Activated CD8-positive, alpha-beta T cell treated with anti-CD3 and anti-CD28 coated beads for 36 hours (primary cell): ENCODE measurements at regions of chr19 and their contacts with region 1.

Region 1: DNA sequence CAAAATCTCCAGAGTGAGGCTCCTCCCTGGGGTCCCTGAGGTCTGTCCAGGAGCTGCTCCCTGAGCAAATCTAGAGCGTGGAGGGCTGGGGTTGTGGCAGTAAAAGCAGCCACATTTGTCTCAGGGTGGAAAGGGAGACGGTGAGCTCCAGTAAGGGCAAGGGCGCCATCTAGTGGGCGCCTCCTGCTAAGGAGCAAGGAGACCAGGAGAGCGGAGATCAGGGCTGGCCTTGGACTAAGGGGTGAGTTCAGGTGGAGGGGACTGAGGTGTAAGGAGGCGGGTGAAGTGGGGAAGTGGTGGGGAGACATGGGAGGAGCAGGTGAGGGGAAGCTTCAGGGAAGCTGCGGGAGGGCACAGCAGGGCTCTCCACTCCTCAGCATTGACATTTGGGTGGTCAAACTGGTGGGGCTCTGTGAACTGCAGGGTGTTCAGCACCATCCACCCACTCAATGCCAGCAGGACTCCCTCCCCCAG is 5.3 kb upstream of the CEACAM21 start:
- DNase-seq: peak; percentile 92
- ATAC-seq: peak; percentile 96
- H3K4me3 Mint-ChIP-seq: no peak overlapping the region
- H3K27ac Mint-ChIP-seq: no peak overlapping the region
- H3K4me1 Mint-ChIP-seq: peaks cover 18% of the 10 kb centered on the region
- H3K27me3 Mint-ChIP-seq: peaks cover 9% of the 10 kb centered on the region
- CTCF ChIP-seq: peak; percentile 95

Region 2: GRCh38 chr19:41521931-41522555 is 48.6 kb before region 1 on chr19:
- CTCF ChIA-PET with region 1: no interaction called
- POLR2A ChIA-PET with region 1: no interaction called
- intact Hi-C with region 1: no loop called
- DNase-seq: peak; percentile 59
- ATAC-seq: peak; percentile 63
- H3K4me3 Mint-ChIP-seq: peak overlapping the region; percentile 72
- H3K27ac Mint-ChIP-seq: peak overlapping the region; percentile 81
- H3K4me1 Mint-ChIP-seq: peaks cover 21% of the 10 kb centered on the region
- H3K27me3 Mint-ChIP-seq: peaks cover 38% of the 10 kb centered on the region
- CTCF ChIP-seq: peak; percentile 27

Region 3: GRCh38 chr19:41541990-41542584 is 28.6 kb before region 1 on chr19:
- CTCF ChIA-PET with region 1: interaction called, 16 read pairs
- POLR2A ChIA-PET with region 1: interaction called, 6 read pairs
- intact Hi-C with region 1: no loop called
- DNase-seq: peak; percentile 88
- ATAC-seq: peak; percentile 9
- H3K4me3 Mint-ChIP-seq: peak overlapping the region; percentile 7
- H3K27ac Mint-ChIP-seq: peak overlapping the region; percentile 64
- H3K4me1 Mint-ChIP-seq: peaks cover 51% of the 10 kb centered on the region
- H3K27me3 Mint-ChIP-seq: peaks cover 5% of the 10 kb centered on the region
- CTCF ChIP-seq: peak; percentile 74

Region 4: DNA sequence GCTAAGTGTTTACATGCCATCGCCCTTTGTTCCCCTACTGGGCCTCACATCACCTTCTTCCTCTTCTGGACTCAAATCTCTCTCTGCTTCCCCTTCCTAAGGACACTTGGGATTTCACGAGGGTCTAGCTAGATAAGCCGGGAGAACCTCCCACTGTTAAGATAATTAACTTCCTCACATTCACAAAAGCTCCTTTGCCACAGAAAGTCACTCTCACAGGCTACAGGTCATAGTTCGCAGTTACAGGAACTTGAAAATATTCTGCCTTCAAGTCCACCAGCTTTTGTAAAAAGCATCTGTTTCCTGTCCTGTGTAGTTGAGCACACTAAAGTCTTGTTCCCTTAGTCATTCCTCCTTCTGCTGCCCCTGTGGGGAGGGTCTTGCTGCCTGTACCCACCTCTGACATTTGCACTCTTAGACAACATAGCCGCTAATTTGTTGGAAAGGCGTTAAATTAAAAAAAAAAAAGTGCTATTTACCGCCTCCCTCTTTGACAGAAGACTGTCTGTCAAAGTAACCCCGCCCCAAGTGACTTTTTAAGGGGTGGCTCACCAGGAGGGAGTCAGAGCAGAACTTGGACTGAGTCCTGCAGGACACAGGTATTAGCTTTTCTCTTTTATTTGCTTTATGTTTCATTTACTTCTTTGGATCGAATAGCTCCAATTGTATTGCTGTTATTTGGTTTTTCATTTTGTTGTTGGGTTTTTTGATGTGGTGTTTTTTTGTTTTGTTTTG is 21.6 kb before region 1 on chr19:
- CTCF ChIA-PET with region 1: interaction called, 16 read pairs
- POLR2A ChIA-PET with region 1: interaction called, 5 read pairs
- intact Hi-C with region 1: no loop called
- DNase-seq: peak; percentile 79
- ATAC-seq: peak; percentile 72
- H3K4me3 Mint-ChIP-seq: peak overlapping the region; percentile 87
- H3K27ac Mint-ChIP-seq: peak overlapping the region; percentile 96
- H3K4me1 Mint-ChIP-seq: peaks cover 47% of the 10 kb centered on the region
- H3K27me3 Mint-ChIP-seq: no peaks in the 10 kb centered on the region
- CTCF ChIP-seq: no peak

Region 5: DNA sequence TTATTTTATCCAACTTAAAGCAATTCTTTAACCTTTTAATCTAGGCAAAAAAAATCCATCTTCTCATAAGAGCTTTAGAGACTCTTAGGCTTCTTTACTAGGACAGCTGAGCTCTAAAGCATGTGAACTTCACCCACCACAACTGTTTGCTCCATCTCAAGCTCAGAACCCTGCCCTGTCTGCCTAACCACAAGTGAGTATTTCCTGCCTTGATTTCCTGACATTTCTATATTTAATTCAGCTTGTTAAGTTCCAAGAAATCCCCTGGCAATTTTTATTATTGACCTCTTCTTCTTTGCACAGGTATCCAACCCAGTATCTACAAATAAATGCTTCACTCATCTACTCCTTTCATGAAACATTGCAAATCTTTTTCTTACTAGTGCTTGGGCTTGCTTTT is 15.8 kb before region 1 on chr19:
- CTCF ChIA-PET with region 1: interaction called, 54 read pairs
- POLR2A ChIA-PET with region 1: interaction called, 4 read pairs
- intact Hi-C with region 1: no loop called
- DNase-seq: no peak
- ATAC-seq: peak; percentile 39
- H3K4me3 Mint-ChIP-seq: peak overlapping the region; percentile 52
- H3K27ac Mint-ChIP-seq: peak overlapping the region; percentile 81
- H3K4me1 Mint-ChIP-seq: peaks cover 46% of the 10 kb centered on the region
- H3K27me3 Mint-ChIP-seq: no peaks in the 10 kb centered on the region
- CTCF ChIP-seq: no peak

Region 6: GRCh38 chr19:41584260-41584810 is 13.7 kb after region 1 on chr19:
- CTCF ChIA-PET with region 1: interaction called, 26 read pairs
- POLR2A ChIA-PET with region 1: interaction called, 3 read pairs
- intact Hi-C with region 1: no loop called
- DNase-seq: no peak
- ATAC-seq: no peak
- H3K4me3 Mint-ChIP-seq: no peak overlapping the region
- H3K27ac Mint-ChIP-seq: no peak overlapping the region
- H3K4me1 Mint-ChIP-seq: no peaks in the 10 kb centered on the region
- H3K27me3 Mint-ChIP-seq: no peaks in the 10 kb centered on the region
- CTCF ChIP-seq: no peak

Region 7: DNA sequence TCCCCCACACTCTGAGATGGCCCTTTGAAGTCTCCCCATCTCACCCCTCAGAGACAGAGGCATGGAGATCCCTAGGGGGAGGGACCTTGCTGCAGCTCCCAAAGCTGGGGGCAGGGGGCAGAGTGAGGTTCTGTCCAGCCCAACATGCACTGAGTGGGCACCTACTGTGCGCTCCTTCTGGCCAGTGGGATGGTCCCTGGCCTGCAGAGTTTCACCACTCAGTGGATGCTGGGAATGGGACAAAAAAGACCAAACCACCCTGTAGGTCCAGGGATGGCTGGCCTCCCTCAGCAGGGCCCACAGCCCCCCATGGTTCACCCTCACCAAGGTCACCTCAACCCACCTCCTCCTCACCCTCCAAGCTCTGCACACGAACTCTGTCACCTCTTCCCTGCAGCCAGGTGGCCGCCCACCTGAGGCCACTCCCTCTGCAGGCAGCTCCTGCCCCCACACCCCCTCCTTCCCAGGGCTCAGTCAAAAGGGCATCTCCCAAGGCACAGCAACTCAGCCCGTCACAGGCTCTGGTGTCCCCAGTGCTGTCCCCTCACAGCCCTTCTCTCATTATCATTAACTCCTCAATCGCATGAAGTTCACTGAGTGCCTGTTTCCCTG is 21.4 kb after region 1 on chr19:
- CTCF ChIA-PET with region 1: interaction called, 15 read pairs
- POLR2A ChIA-PET with region 1: no interaction called
- intact Hi-C with region 1: no loop called
- DNase-seq: no peak
- ATAC-seq: no peak
- H3K4me3 Mint-ChIP-seq: no peak overlapping the region
- H3K27ac Mint-ChIP-seq: no peak overlapping the region
- H3K4me1 Mint-ChIP-seq: peaks cover 6% of the 10 kb centered on the region
- H3K27me3 Mint-ChIP-seq: peaks cover 15% of the 10 kb centered on the region
- CTCF ChIP-seq: no peak

Region 8: GRCh38 chr19:41597600-41598041 is 26.9 kb after region 1 on chr19:
- CTCF ChIA-PET with region 1: interaction called, 15 read pairs
- POLR2A ChIA-PET with region 1: no interaction called
- intact Hi-C with region 1: no loop called
- DNase-seq: peak; percentile 89
- ATAC-seq: peak; percentile 87
- H3K4me3 Mint-ChIP-seq: no peak overlapping the region
- H3K27ac Mint-ChIP-seq: no peak overlapping the region
- H3K4me1 Mint-ChIP-seq: peaks cover 7% of the 10 kb centered on the region
- H3K27me3 Mint-ChIP-seq: peaks cover 26% of the 10 kb centered on the region
- CTCF ChIP-seq: peak; percentile 95

Region 9: DNA sequence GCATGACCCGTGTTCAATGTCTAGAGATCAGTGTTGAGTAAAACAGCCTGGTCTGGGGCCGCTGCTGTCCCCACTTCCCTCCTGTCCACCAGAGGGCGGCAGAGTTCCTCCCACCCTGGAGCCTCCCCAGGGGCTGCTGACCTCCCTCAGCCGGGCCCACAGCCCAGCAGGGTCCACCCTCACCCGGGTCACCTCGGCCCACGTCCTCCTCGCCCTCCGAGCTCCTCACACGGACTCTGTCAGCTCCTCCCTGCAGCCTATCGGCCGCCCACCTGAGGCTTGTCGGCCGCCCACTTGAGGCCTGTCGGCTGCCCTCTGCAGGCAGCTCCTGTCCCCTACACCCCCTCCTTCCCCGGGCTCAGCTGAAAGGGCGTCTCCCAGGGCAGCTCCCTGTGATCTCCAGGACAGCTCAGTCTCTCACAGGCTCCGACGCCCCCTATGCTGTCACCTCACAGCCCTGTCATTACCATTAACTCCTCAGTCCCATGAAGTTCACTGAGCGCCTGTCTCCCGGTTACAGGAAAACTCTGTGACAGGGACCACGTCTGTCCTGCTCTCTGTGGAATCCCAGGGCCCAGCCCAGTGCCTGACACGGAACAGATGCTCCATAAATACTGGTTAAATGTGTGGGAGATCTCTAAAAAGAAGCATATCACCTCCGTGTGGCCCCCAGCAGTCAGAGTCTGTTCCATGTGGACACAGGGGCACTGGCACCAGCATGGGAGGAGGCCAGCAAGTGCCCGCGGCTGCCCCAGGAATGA is 136.2 kb after region 1 on chr19:
- CTCF ChIA-PET with region 1: no interaction called
- POLR2A ChIA-PET with region 1: no interaction called
- intact Hi-C with region 1: no loop called
- DNase-seq: peak; percentile 80
- ATAC-seq: peak; percentile 97
- H3K4me3 Mint-ChIP-seq: peak overlapping the region; percentile 39
- H3K27ac Mint-ChIP-seq: no peak overlapping the region
- H3K4me1 Mint-ChIP-seq: no peaks in the 10 kb centered on the region
- H3K27me3 Mint-ChIP-seq: peaks cover 38% of the 10 kb centered on the region
- CTCF ChIP-seq: peak; percentile 100